ENCODE measurements at regions of chr3 and their contacts with region 1.

Region 1: DNA sequence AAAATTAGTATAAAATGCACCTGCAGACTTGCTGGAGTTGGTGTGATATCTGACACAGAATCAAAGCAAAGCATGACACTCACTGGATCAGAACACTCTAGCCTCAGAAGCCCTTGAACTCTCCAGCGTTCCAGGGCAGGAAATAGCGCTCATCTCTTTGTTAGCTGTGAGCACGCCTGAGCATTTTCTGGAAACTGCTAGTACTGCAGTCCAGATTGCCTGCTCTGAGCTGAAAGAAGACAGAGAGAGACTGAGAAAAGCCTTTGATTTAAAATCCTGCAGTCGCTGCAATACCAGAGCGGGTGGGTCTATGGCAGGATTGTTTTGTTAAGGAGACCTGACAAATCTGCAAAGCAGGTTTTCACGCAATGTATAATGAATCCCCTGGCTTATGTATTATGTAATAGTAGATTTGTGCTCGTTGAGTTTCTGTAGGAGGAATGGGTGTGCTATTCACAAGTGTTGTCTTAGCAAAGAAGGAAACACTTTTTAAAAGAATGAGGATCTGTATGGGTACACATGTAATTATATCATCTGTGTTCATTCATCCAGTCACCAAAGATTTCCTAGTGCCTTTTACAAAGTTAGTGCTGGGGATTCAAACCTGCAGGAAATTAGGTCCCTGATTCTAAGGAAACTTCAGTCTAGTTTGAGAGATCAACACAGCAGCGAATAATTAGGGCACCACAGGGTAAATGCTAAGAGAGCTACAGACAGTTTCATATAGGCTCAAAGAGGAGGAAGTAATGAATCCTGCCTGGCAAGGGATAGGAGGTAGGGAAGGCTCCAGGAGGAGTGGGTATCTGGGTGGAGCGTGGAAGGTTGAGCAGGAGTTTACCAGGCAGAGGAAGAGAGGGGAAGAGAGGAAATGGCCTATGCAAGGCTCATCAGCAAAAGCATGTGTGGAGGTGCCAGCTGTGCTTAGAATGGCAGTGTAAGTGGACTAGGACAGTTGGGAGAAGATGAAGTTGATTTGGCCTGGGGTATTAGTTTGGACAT is 26.1 kb upstream of the MGLL start:
- DNase-seq: no peak
- ATAC-seq: no peak
- H3K4me3 ChIP-seq: no peak overlapping the region
- H3K27ac ChIP-seq: no peak overlapping the region
- H3K4me1 ChIP-seq: no peaks in the 10 kb centered on the region
- H3K27me3 ChIP-seq: peaks cover 18% of the 10 kb centered on the region
- CTCF ChIP-seq: no peak

Region 2: DNA sequence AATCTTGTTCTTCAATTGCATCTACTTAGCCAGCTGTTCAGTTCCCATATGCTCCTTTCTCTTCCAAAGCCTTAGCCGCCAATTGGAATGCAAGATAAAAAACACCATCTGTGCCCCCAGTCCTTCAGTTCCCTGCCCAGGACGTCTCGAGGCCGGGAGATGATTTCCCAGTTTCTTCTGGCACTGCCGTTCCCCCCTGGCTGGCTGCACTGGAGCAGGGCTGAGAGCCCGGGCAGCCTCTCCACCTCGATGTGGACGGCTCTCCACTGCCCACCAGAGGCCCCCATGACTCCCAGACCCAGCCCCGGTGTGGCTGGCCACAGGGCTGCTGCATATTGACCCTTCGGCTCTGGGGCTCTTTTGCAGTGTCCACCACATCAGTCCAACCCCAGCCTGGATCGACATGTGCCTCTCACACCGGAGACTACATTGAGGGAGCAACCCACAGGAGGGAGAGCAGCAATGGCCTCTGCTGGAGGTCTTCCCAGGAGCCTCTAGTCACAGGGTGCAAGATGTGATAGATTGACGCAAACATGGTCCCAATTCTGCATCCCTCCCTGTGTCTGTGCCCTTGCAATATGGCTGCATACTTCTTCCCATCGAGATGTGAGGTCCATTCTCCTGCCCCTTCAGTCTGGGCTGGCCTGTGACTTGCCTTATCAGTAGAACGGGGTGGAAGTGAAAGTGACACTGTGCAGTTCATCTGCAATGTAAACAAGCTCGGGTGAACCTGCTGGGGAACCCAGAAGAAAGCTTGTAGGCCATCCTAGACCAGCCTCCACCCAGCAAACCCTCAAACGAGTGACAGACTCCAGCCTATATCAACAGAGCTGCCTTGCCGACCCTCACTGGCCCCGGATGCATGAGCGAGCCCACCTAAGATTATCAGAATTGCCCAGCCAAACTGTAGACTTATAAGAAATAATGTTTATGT is 508.2 kb before region 1 on chr3:
- CTCF ChIA-PET with region 1: no interaction called
- POLR2A ChIA-PET with region 1: no interaction called
- in situ Hi-C with region 1: no loop called
- intact Hi-C with region 1: no loop called
- DNase-seq: no peak
- ATAC-seq: no peak
- H3K4me3 ChIP-seq: no peak overlapping the region
- H3K27ac ChIP-seq: no peak overlapping the region
- H3K4me1 ChIP-seq: no peaks in the 10 kb centered on the region
- H3K27me3 ChIP-seq: peaks cover 3% of the 10 kb centered on the region; the same call in 1 of the 2 replicates
- CTCF ChIP-seq: no peak

Region 3: DNA sequence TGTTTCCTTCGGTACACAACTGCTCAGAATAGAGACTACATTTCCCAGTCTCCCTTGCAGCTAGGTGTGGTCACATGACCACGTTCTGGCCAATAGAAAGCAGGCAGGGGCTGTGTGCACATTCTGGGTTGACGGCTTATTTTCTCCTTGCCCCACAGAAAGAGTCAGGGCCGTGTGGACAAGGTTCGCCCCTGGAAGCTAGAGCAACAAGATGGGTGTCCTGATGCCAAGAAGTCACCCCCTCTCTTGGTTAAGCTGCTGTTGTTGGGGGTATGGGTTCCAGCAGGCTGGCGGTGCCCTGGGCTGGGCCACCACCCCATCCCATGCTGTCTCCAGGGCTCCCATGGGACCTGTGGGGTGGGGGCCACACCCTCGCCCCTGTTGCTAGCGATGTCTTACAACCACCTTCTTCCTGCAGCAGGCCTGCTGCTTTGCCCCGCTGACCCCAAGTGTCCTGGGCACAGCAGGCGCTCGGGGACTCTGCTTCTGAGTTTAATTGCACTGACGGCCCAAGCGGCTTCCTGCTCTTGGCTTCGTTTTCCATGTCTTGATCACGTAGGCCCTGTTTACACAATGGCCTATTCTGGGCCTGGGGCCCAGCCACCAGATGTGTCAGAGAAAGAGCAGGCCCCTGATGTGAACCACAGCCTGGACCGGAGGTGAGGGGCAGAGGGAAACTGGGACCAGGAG is 150.7 kb before region 1 on chr3:
- CTCF ChIA-PET with region 1: no interaction called
- POLR2A ChIA-PET with region 1: no interaction called
- in situ Hi-C with region 1: no loop called
- intact Hi-C with region 1: no loop called
- DNase-seq: no peak
- ATAC-seq: peak; percentile 80
- H3K4me3 ChIP-seq: no peak overlapping the region
- H3K27ac ChIP-seq: no peak overlapping the region
- H3K4me1 ChIP-seq: no peaks in the 10 kb centered on the region
- H3K27me3 ChIP-seq: no peaks in the 10 kb centered on the region
- CTCF ChIP-seq: no peak

Region 4: DNA sequence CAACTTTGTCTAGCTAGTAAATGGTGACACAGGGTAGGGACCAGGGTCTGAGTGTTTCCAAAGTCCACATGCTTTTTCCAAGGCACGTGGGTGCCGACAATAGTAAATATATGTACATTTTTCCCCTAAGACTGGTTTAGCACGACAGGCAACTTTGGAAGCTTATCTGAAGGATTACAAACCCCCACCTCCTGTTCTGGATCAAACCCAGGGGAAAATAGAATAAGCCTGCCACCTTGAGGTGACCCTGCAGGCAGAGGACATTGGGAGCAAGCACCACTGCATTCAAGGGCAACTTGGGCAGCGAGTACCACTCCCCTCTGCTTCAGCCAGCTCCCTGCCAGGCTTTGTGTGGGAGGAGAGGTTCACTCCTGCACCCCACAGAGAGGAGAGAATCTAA is 111.4 kb after region 1 on chr3:
- CTCF ChIA-PET with region 1: no interaction called
- POLR2A ChIA-PET with region 1: no interaction called
- in situ Hi-C with region 1: loop called (anchors 10 kb)
- intact Hi-C with region 1: no loop called
- DNase-seq: no peak
- ATAC-seq: peak; percentile 83
- H3K4me3 ChIP-seq: no peak overlapping the region
- H3K27ac ChIP-seq: no peak overlapping the region
- H3K4me1 ChIP-seq: no peaks in the 10 kb centered on the region
- H3K27me3 ChIP-seq: peaks cover 23% of the 10 kb centered on the region
- CTCF ChIP-seq: peak; percentile 67

Measured in Panc1 (cell line).